Adrenal gland (tissue), 19 donors: ENCODE measurements at regions of chr15 and their contacts with region 1.

Region 1: DNA sequence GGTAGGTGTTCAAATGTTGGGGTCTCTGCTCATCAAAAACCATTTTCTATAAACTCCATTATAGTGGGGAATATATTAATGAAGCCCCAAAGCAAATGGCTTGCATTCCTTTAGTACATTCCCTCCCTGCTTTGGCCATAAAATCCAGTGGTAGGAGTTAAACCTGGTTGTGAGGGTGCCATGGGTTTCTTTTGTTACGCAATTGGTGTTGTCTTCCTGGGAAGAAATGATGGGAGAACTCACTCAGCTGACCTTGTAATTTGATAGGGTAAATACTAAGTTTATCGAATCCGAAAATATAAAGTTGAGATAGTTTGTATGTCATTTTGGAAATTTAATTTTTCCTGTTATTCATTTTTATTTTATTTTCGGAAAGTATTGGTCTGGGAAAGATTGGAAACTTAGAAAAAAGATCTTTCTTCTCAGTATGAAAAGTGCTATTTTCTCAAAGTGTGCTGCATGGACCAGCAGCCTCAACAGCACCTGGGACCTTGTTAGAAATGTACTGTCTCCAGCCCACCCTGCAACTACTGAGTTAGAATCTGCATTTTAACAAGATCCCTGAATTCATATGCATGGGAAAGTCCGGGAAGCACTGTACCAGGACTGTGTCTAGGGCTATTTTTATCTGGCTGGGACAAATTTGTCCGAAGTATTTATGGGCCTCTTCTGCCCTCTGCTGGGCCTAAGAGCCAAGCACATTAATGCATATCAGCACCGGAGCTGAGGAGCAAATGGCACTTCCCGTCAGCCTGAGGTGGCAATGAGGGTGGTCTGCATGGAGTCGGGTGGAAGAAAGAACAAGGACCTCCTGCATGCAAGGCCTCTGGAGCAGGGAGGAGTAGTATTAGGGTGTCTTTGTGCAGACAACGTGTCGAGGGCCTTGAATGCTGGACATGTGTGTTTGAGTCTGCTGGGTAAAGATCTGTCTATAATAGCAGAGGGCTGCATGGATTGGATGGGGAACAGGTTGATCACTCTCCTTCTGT is 54.7 kb downstream of the FAM81A start:
- DNase-seq: peak; percentile 47 to 84 (median 61)
- H3K4me3 ChIP-seq: no peak overlapping the region
- H3K27ac ChIP-seq: no peak overlapping the region
- H3K4me1 ChIP-seq: no peaks in the 10 kb centered on the region
- H3K27me3 ChIP-seq: no peaks in the 10 kb centered on the region
- CTCF ChIP-seq: peak; percentile 73 to 92 (median 85)
- POLR2A ChIP-seq: no peak

Region 2: GRCh38 chr15:58980351-58980939 is 512.2 kb before region 1 on chr15:
- intact Hi-C with region 1: loop called in 1 of 2 experiments (anchors 5 kb)
- DNase-seq: no peak
- H3K4me3 ChIP-seq: no peak overlapping the region
- H3K27ac ChIP-seq: no peak overlapping the region
- H3K4me1 ChIP-seq: peaks cover 0 to 15% of the 10 kb centered on the region in 2 donors
- H3K27me3 ChIP-seq: no peaks in the 10 kb centered on the region
- CTCF ChIP-seq: peak; percentile 16 to 77 (median 58)
- POLR2A ChIP-seq: no peak

Region 3: DNA sequence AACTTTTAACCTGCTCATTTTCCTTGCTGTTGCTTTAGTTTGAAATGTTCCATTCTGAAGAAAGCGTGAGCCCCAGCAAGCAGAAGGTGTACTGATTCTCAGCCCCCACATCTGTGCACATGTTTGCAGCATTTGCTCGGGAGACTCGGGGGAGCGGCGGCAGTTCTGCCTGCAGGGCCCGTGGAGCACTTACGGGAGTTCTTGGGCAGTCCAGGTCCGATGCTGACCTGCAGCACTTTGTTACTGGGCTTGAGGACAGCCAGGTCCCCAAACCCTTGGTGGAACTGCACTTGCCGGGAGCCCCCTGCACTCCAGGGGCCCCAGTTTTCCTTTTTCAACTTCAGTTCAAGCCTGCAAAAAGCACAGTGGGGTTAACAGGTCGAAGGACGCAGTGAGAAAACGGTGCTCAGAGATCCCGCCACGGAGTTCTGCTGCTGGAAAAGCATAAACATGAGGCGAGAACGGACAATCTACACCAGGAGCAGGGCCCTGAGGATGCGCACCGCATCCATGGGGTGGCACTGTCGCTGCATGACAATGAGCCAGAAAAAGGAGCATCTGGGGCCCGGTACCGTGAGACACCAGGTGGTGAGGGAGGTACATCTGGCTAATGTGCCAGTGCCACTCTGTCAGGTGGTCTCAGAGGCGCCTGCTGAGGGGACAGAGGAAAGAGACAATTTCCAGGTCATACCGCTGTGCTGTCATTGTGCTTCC is 331.6 kb before region 1 on chr15:
- intact Hi-C with region 1: loop called in 1 of 2 experiments (anchors 5 kb)
- DNase-seq: peak in 6 of 7 donors; percentile 30 to 60 (median 38)
- H3K4me3 ChIP-seq: no peak overlapping the region
- H3K27ac ChIP-seq: no peak overlapping the region
- H3K4me1 ChIP-seq: no peaks in the 10 kb centered on the region
- H3K27me3 ChIP-seq: no peaks in the 10 kb centered on the region
- CTCF ChIP-seq: peak; percentile 22 to 64 (median 52)
- POLR2A ChIP-seq: no peak

Region 4: DNA sequence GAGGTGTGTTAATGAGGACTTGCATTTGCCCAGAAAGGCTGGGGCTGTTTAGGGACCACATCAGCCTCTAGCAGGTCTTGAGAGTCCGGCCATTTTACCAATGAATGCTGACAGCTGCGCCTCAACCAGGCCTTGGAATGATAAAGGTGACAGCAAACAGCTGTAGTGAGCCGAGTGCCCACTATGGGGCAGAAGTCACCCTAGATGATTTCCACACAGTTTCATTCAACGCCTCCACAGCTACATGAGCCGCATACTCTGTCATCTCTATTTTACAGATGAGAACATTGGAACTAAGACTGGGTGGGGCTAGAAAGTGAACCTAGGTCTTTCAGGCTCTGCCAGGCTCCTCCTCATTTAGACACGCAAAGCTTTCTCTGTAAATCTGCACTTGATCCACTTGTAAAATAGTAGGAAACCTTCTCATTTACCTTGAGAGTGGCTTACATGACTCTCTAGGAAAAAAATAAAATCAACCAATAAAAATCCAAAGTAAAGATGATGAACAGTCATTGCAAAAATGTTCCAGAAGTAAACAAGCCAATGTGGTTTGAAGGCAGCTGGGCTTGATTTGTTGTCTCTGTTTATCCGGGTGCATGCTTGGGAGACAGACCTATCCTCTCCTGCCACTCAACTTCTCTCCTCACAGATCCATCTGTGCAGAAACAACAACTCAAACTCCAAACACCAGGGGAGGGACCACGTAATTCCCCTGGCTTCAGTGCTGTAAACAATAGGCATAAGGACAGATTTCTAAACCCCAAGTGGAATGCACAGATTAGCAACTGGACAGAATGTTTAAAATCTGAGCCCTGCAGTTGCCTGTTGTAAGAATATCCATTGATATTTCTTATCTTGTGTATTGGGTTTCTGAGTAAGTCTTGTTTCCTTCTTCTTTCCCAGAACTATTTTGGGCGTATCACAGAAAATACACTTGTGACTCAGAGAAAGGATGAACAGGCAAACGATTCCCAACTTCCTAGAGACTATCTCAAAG is 317.6 kb before region 1 on chr15:
- intact Hi-C with region 1: loop called in 1 of 2 experiments (anchors 10 kb)
- DNase-seq: peak in 6 of 7 donors; percentile 24 to 76 (median 47)
- H3K4me3 ChIP-seq: no peak overlapping the region
- H3K27ac ChIP-seq: peak overlapping the region in 2 of 5 donors; percentile 25 to 50
- H3K4me1 ChIP-seq: peaks cover 7 to 13% of the 10 kb centered on the region in 2 donors
- H3K27me3 ChIP-seq: no peaks in the 10 kb centered on the region
- CTCF ChIP-seq: peak; percentile 13 to 54 (median 51)
- POLR2A ChIP-seq: no peak

Region 5: DNA sequence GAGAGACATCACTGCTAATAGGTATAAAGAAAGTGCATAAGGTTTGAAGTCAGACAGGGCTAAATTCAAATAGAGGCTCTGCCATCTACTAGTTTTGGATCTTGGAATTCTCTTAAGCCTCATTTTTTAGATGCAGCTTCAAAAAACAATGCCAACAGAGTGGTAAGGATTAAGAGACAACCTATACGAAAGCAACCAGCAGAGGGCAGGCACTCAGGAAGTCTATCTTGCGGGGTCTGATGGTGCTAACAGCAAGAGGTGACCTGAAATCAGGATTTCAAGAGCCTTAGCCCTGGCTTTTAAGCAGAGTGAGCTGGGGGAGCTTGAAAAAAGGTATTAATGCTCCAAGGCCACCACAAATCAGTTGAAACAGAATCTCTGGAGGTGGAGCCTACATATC is 245.3 kb before region 1 on chr15:
- intact Hi-C with region 1: loop called in 1 of 2 experiments (anchors 5 kb)
- DNase-seq: peak; percentile 43 to 81 (median 62)
- H3K4me3 ChIP-seq: no peak overlapping the region
- H3K27ac ChIP-seq: no peak overlapping the region
- H3K4me1 ChIP-seq: no peaks in the 10 kb centered on the region
- H3K27me3 ChIP-seq: no peaks in the 10 kb centered on the region
- CTCF ChIP-seq: peak; percentile 34 to 66 (median 62)
- POLR2A ChIP-seq: no peak

Region 6: GRCh38 chr15:59329570-59330350 is 162.9 kb before region 1 on chr15:
- intact Hi-C with region 1: no loop called
- DNase-seq: no peak
- H3K4me3 ChIP-seq: no peak overlapping the region
- H3K27ac ChIP-seq: peak overlapping the region in 1 of 5 donors; percentile 27
- H3K4me1 ChIP-seq: no peaks in the 10 kb centered on the region
- H3K27me3 ChIP-seq: no peaks in the 10 kb centered on the region
- CTCF ChIP-seq: no peak
- POLR2A ChIP-seq: no peak